ENCODE measurements at regions of chr4 and their contacts with region 1.

Region 1: GRCh38 chr4:26885912-26886274 is 25.3 kb downstream of the STIM2 start:
- DNase-seq: peak in 4 of 9 experiments; percentile 39 to 89 (median 63)
- ATAC-seq: peak; percentile 67
- H3K4me3 ChIP-seq: peak overlapping the region; percentile 6 to 38
- H3K4me3 Mint-ChIP-seq: peak overlapping the region; percentile 81
- H3K27ac ChIP-seq: peak overlapping the region; percentile 68 to 92
- H3K27ac Mint-ChIP-seq: peak overlapping the region; percentile 97
- H3K4me1 ChIP-seq: peaks cover 57% of the 10 kb centered on the region
- H3K4me1 Mint-ChIP-seq: peaks cover 80% of the 10 kb centered on the region
- H3K27me3 ChIP-seq: no peaks in the 10 kb centered on the region
- H3K27me3 Mint-ChIP-seq: no peaks in the 10 kb centered on the region
- CTCF ChIP-seq: no peak

Region 2: DNA sequence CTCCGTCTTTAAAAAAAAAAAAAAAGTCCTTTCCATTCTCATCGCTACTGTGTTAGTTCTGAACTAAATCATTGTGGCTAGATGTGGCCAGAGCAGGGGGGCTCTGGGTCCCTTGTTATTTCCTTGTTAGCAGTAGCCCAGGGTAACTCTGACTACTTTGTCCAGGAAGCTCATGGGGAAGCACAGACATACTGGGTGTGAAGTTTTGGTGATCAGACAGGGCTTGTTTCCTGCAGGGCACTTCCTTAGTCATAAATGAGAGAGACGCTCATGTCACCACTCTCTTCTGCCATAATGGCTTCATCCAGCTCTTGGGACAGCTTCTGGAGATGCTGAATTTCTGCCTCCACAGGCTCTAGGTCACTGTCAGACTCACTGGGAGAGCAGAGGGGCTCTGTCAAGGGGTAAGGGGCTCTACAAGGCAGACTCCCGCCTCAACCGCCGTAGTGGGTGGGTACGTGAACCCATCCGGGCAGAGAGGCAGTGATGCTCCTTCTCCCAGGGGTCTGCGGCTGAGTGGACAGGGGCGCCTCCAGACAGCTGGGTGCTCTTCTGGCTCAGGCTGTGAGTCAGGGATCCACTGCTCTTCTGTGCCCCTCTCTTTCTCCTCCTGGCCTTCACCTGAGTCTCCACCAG is 12.4 kb before region 1 on chr4:
- CTCF ChIA-PET with region 1: interaction called, 3 read pairs
- POLR2A ChIA-PET with region 1: interaction called, 9 read pairs
- intact Hi-C with region 1: loop called in 1 of 2 experiments (anchors 1 kb)
- DNase-seq: peak in 8 of 9 experiments; percentile 46 to 96 (median 62)
- ATAC-seq: peak; percentile 87
- H3K4me3 ChIP-seq: peak overlapping the region in 1 of 2 experiments; percentile 12
- H3K4me3 Mint-ChIP-seq: peak overlapping the region; percentile 67
- H3K27ac ChIP-seq: peak overlapping the region; percentile 55 to 88
- H3K27ac Mint-ChIP-seq: peak overlapping the region; percentile 88
- H3K4me1 ChIP-seq: peaks cover 68% of the 10 kb centered on the region
- H3K4me1 Mint-ChIP-seq: peaks cover 86% of the 10 kb centered on the region
- H3K27me3 ChIP-seq: no peaks in the 10 kb centered on the region
- H3K27me3 Mint-ChIP-seq: no peaks in the 10 kb centered on the region
- CTCF ChIP-seq: no peak

Region 3: GRCh38 chr4:26916195-26916594 is 30.3 kb after region 1 on chr4:
- CTCF ChIA-PET with region 1: interaction called, 3 read pairs
- POLR2A ChIA-PET with region 1: interaction called, 4 read pairs
- intact Hi-C with region 1: loop called in 1 of 2 experiments (anchors 2 kb)
- DNase-seq: peak in 3 of 9 experiments; percentile 18 to 39 (median 19)
- ATAC-seq: no peak
- H3K4me3 ChIP-seq: no peak overlapping the region
- H3K4me3 Mint-ChIP-seq: no peak overlapping the region
- H3K27ac ChIP-seq: peak overlapping the region in 1 of 2 experiments; percentile 1
- H3K27ac Mint-ChIP-seq: peak overlapping the region; percentile 68
- H3K4me1 ChIP-seq: peaks cover 39% of the 10 kb centered on the region
- H3K4me1 Mint-ChIP-seq: peaks cover 66% of the 10 kb centered on the region
- H3K27me3 ChIP-seq: no peaks in the 10 kb centered on the region
- H3K27me3 Mint-ChIP-seq: no peaks in the 10 kb centered on the region
- CTCF ChIP-seq: no peak

Measured in CD8-positive, alpha-beta T cell (primary cell).